CD8-positive, alpha-beta memory T cell (primary cell): ENCODE measurements at regions of chr10 and their contacts with region 1.

Region 1: DNA sequence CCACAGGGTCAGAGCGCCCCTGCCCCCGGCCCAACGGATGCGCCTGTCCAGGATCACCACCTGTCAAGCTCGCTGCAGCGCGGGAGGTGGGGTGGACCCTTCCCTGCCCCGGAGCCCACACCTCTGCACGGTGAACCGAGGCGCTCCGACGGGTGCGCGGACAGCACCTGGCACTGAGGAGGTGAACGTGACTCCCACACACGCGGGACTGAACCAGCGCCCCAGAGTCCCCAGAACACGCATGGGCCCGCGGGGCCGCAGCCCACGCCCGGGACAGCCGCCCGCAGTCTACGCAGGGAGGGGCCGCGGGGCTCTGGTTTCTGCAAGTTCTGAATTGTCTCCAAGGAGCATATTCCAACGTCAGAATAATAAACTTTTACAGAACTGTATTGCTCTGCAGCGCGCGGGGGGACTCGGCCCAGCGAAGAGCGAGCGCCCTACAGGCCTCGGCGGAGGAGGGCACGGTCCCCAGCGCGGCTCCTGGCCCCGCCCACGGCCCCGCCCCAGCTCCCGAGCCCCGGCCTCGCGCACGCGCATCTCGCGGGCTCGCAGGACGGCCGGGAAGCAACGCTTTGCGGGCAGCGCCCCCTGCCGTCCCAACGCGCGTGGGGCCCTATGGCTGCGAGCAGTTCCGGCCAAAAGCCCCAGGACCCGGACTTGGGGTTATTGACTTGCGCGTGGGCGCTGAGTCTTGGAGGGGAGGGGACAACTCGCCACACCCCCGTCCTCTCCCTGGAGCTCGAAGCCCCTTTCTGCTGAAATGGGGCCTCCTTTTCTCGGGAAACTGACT is 29.7 kb downstream of the OAT start:
- DNase-seq: peak; percentile 89 to 94 (median 92)
- H3K4me3 ChIP-seq: peak overlapping the region; percentile 58
- H3K4me3 Mint-ChIP-seq: peak overlapping the region; percentile 42 to 74 (median 63)
- H3K27ac ChIP-seq: no peak overlapping the region
- H3K27ac Mint-ChIP-seq: peak overlapping the region in 3 of 8 donors; percentile 60 to 74 (median 69)
- H3K4me1 ChIP-seq: peaks cover 10% of the 10 kb centered on the region
- H3K4me1 Mint-ChIP-seq: peaks cover 0 to 4% (median 2%) of the 10 kb centered on the region in 3 donors
- H3K27me3 ChIP-seq: no peaks in the 10 kb centered on the region
- H3K27me3 Mint-ChIP-seq: peaks cover 2 to 7% of the 10 kb centered on the region in 2 donors

Region 2: GRCh38 chr10:123994417-123995081 is 394.5 kb before region 1 on chr10:
- CTCF ChIA-PET with region 1: interaction called, 92 read pairs
- POLR2A ChIA-PET with region 1: no interaction called
- DNase-seq: peak; percentile 63 to 80 (median 70)
- H3K4me3 ChIP-seq: peak overlapping the region; percentile 7
- H3K4me3 Mint-ChIP-seq: peak overlapping the region in 6 of 7 donors; percentile 57 to 82 (median 64)
- H3K27ac ChIP-seq: no peak overlapping the region
- H3K27ac Mint-ChIP-seq: no peak overlapping the region
- H3K4me1 ChIP-seq: peaks cover 11% of the 10 kb centered on the region
- H3K4me1 Mint-ChIP-seq: peaks cover 9 to 15% (median 12%) of the 10 kb centered on the region in 3 donors
- H3K27me3 ChIP-seq: peaks cover 15% of the 10 kb centered on the region
- H3K27me3 Mint-ChIP-seq: peaks cover 33 to 71% of the 10 kb centered on the region in 2 donors

Region 3: GRCh38 chr10:124378881-124379471 is 10.0 kb before region 1 on chr10:
- CTCF ChIA-PET with region 1: interaction called, 15 read pairs
- POLR2A ChIA-PET with region 1: no interaction called
- DNase-seq: no peak
- H3K4me3 ChIP-seq: no peak overlapping the region
- H3K4me3 Mint-ChIP-seq: no peak overlapping the region
- H3K27ac ChIP-seq: no peak overlapping the region
- H3K27ac Mint-ChIP-seq: no peak overlapping the region
- H3K4me1 ChIP-seq: no peaks in the 10 kb centered on the region
- H3K4me1 Mint-ChIP-seq: no peaks in the 10 kb centered on the region
- H3K27me3 ChIP-seq: peaks cover 10% of the 10 kb centered on the region
- H3K27me3 Mint-ChIP-seq: peaks cover 24 to 66% of the 10 kb centered on the region in 2 donors

Region 4: DNA sequence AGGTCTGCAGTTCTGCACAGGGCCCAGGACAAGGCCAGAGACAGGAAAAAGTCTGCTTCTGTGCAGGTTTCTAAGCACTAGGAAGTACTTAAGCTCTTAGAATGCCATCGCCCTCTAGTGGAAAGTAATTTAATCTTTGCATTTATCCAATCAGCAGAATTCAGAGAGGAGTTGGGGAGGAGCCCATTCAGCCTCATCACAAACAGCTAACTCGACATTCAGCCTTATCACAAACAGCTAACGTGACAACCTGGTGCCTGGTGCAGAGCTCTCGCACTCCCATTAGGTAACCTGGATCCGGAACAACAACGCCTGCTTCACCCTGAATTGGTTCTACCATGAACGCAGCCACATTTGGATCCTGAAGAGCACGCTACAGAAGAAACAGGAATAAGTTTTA is 14.5 kb after region 1 on chr10:
- CTCF ChIA-PET with region 1: interaction called, 22 read pairs
- POLR2A ChIA-PET with region 1: no interaction called
- DNase-seq: peak in 2 of 5 donors; percentile 51 to 64
- H3K4me3 ChIP-seq: no peak overlapping the region
- H3K4me3 Mint-ChIP-seq: no peak overlapping the region
- H3K27ac ChIP-seq: no peak overlapping the region
- H3K27ac Mint-ChIP-seq: peak overlapping the region; percentile 4 to 83 (median 60)
- H3K4me1 ChIP-seq: peaks cover 9% of the 10 kb centered on the region
- H3K4me1 Mint-ChIP-seq: peaks cover 8 to 11% (median 9%) of the 10 kb centered on the region in 3 donors
- H3K27me3 ChIP-seq: no peaks in the 10 kb centered on the region
- H3K27me3 Mint-ChIP-seq: no peaks in the 10 kb centered on the region

Region 5: DNA sequence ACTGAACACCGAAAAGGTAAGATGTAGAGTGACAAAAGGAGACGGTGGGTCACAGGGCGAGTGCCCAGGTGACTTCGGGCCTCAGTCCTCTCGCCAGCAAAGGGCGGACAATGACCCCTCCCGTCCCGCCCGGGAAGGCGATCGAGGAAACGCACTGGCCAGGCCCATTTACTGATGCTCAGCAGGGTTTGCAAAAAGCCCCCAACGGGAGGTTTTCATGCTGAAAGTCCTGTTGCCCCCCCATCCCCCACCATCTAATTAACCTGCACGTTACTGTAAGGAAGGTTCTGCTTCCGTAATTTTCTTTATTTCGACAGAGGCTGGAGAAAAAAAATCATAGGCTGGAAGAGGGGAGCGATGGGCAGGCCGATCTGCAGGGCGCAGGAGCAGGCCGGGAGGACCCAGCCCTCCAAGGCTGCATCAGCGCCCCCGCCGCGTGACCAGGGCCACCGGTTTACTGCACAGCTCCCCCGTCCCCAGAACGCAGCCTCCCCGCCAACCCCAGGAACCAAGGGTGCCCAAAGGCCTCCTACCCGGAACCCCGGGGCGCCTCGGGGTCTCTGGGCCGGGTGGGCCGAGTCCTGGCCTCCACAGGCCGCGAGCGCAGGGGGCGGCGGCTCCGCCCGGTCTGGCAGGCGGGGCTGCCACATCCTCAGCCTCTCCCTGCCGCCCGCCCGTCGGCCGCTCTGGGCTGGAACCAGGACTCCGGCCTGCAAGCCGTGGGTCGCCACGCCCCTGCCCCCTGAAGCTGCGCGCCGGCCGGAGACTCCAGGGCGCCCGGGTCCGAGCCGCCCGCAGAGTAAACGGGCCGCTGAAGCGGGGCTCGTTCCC is 29.1 kb after region 1 on chr10:
- CTCF ChIA-PET with region 1: interaction called, 19 read pairs
- POLR2A ChIA-PET with region 1: no interaction called
- DNase-seq: peak; percentile 23 to 67 (median 38)
- H3K4me3 ChIP-seq: peak overlapping the region; percentile 63
- H3K4me3 Mint-ChIP-seq: peak overlapping the region; percentile 79 to 95 (median 85)
- H3K27ac ChIP-seq: peak overlapping the region; percentile 54
- H3K27ac Mint-ChIP-seq: peak overlapping the region in 7 of 8 donors; percentile 21 to 76 (median 57)
- H3K4me1 ChIP-seq: peaks cover 13% of the 10 kb centered on the region
- H3K4me1 Mint-ChIP-seq: peaks cover 21 to 37% (median 28%) of the 10 kb centered on the region in 3 donors
- H3K27me3 ChIP-seq: no peaks in the 10 kb centered on the region
- H3K27me3 Mint-ChIP-seq: peaks cover 3 to 6% of the 10 kb centered on the region in 2 donors